Activated T-helper 1 cell treated with anti-CD3 and anti-CD28 coated beads, Interleukin-12 subunit alpha, Interleukin-12 subunit beta, Interleukin-2, Interleukin-4 antibody, amounts not matched to agents 30 ng/mL and 10 ng/mL and 1 ng/mL, durations not matched to agents 14 hours and 24 hours and 36 hours (primary cell): ENCODE measurements at regions of chr10 and their contacts with region 1.

Region 1: GRCh38 chr10:46228563-46229071 is 58.2 kb upstream of the ANTXRL start:
- DNase-seq: peak; percentile 30
- H3K4me3 Mint-ChIP-seq: no peak overlapping the region
- H3K27ac Mint-ChIP-seq: no peak overlapping the region
- H3K4me1 Mint-ChIP-seq: no peaks in the 10 kb centered on the region
- H3K27me3 Mint-ChIP-seq: no peaks in the 10 kb centered on the region

Region 2: DNA sequence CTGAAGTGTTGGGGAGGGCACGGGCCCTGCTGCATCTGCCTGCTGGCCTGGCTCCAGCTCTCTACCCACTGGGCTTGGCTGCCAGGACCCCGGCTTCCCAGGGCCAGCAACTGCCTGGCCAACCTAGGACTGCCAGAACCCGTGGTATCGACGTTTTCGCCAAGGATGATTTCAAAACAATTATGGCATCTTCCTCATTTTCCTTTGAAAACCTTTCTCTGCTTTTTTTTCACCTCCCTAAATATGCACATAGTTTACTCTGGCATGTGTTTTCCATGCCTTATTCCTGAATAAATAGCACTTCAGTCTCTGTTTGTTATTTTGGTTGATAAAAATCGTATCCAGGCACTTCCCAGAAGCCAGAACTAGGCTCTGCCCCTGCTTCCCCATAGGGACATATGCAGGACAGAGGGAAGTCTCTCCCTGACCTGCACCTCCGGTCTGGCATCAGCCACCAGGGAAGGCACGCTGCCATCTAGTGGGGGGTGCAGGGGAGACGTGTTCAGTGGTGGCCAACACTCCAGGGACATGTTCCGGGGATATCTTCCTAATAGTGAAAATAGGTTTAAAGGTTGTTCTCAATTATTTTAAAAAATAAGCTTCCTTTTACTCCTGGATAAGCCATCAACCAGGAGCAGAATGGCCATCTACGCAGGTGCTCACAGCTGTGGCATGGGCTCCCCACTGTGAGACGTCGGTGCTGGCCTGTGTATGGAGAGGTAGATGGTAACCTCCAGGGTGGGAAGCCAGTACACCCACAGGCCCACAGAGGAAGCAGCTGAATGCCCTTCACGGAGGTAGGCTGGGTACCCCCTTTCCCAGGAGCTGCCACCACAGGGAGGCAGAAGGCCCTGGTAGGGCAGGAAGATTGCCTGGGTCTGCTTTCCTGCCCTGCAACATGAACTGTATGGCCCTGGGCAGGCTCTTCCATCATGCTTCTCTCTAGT is 27.5 kb after region 1 on chr10:
- intact Hi-C with region 1: loop called (anchors 1 kb)
- DNase-seq: peak; percentile 21
- H3K4me3 Mint-ChIP-seq: no peak overlapping the region
- H3K27ac Mint-ChIP-seq: no peak overlapping the region
- H3K4me1 Mint-ChIP-seq: peaks cover 5% of the 10 kb centered on the region
- H3K27me3 Mint-ChIP-seq: no peaks in the 10 kb centered on the region

Region 3: GRCh38 chr10:46325023-46325422 is 96.4 kb after region 1 on chr10:
- intact Hi-C with region 1: loop called (anchors 10 kb)
- DNase-seq: no peak
- H3K4me3 Mint-ChIP-seq: no peak overlapping the region
- H3K27ac Mint-ChIP-seq: no peak overlapping the region
- H3K4me1 Mint-ChIP-seq: no peaks in the 10 kb centered on the region
- H3K27me3 Mint-ChIP-seq: peaks cover 12% of the 10 kb centered on the region